Activated CD4-positive, alpha-beta memory T cell treated with anti-CD3 and anti-CD28 coated beads, Interleukin-2, amount 10 ng/mL, durations not matched to agents 7 days and 5 days (primary cell): ENCODE measurements at regions of chr5 and their contacts with region 1.

Region 1: DNA sequence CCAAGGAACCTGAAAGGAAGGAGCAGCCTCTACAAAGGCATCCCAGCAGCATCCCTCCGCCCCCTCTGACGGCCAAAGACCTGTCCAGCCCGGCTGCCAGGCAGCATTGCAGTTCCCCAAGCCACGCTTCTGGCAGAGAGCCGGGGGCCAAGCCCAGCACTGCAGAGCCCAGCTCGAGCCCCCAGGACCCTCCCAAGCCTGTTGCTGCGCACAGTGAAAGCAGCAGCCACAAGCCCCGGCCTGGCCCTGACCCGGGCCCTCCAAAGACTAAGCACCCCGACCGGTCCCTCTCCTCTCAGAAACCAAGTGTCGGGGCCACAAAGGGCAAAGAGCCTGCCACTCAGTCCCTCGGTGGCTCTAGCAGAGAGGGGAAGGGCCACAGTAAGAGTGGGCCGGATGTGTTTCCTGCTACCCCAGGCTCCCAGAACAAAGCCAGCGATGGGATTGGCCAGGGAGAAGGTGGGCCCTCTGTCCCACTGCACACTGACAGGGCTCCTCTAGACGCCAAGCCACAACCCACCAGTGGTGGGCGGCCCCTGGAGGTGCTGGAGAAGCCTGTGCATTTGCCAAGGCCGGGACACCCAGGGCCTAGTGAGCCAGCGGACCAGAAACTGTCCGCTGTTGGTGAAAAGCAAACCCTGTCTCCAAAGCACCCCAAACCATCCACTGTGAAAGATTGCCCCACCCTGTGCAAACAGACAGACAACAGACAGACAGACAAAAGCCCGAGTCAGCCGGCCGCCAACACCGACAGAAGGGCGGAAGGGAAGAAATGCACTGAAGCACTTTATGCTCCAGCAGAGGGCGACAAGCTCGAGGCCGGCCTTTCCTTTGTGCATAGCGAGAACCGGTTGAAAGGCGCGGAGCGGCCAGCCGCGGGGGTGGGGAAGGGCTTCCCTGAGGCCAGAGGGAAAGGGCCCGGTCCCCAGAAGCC is 30.8 kb downstream of the CD180 start:
- DNase-seq: peak; percentile 90
- H3K4me3 Mint-ChIP-seq: peak overlapping the region; percentile 86
- H3K27ac Mint-ChIP-seq: peak overlapping the region; percentile 98
- H3K4me1 Mint-ChIP-seq: peaks cover 67% of the 10 kb centered on the region
- H3K27me3 Mint-ChIP-seq: no peaks in the 10 kb centered on the region

Region 2: DNA sequence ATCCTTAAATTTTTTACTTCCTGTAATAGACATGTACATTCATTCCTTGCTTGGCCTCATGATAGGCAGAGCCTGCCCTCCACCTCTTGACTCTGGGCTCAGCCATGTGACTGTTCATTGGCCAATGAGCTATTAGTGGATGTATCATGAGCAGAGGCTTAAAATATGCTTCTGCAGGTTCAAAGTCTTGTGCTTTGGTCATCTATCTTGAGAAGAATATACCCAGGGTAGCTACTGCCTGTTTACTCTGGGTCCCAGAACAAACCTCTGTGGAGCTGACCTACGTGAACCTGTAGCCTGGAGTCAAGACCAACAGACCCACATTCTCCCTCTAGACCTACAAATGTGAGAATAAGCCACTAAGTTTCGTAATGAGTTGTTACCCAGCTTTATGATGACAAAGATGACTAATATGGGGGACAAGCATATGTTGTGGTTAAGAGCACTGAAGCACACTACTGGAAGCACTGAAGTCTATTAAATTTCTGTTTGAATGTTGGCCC is 325.2 kb before region 1 on chr5:
- CTCF ChIA-PET with region 1: no interaction called
- POLR2A ChIA-PET with region 1: interaction called, 13 read pairs
- DNase-seq: peak; percentile 55
- H3K4me3 Mint-ChIP-seq: peak overlapping the region; percentile 31
- H3K27ac Mint-ChIP-seq: peak overlapping the region; percentile 92
- H3K4me1 Mint-ChIP-seq: peaks cover 64% of the 10 kb centered on the region
- H3K27me3 Mint-ChIP-seq: peaks cover 3% of the 10 kb centered on the region

Region 3: GRCh38 chr5:67182301-67182790 is 16.6 kb after region 1 on chr5:
- CTCF ChIA-PET with region 1: interaction called, 24 read pairs
- POLR2A ChIA-PET with region 1: interaction called, 160 read pairs
- DNase-seq: no peak
- H3K4me3 Mint-ChIP-seq: peak overlapping the region; percentile 34
- H3K27ac Mint-ChIP-seq: peak overlapping the region; percentile 77
- H3K4me1 Mint-ChIP-seq: peaks cover 53% of the 10 kb centered on the region
- H3K27me3 Mint-ChIP-seq: no peaks in the 10 kb centered on the region

Region 4: DNA sequence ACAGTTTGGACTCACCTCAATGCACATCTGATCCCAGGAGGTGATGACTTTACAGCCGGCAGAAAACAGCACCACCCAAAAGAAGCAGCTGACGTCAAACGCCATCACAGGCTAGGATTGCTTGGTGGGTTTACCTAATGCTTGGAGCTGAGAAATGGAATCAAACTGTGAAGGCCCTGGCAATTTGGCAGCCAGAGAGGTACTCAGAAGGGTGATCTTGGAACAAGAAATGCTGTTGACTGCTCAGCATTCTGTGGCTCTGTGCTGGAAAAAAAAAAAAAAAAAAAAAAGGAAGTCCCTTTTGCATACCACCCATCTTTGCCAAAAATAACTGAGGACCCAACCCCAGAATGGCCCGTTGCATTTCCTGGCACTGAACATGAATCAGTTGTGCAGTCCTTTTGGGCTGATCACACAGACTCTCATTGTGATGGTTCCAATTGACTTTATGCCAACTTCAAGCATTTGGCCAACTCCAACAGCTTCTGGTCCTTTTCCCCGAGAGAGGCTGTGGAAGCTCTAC is 30.8 kb after region 1 on chr5 and contains the start of gene CD180:
- CTCF ChIA-PET with region 1: interaction called, 519 read pairs
- POLR2A ChIA-PET with region 1: interaction called, 863 read pairs
- DNase-seq: no peak
- H3K4me3 Mint-ChIP-seq: no peak within 1 kb of the TSS
- H3K27ac Mint-ChIP-seq: no peak within 1 kb of the TSS
- H3K4me1 Mint-ChIP-seq: peaks cover 49% of the 10 kb centered on the region
- H3K27me3 Mint-ChIP-seq: no peaks in the 10 kb centered on the region
- total RNA-seq, gene CD180: 0.75 to 0.88 TPM

Region 5: GRCh38 chr5:67215583-67216471 is 50.0 kb after region 1 on chr5:
- CTCF ChIA-PET with region 1: interaction called, 519 read pairs
- POLR2A ChIA-PET with region 1: interaction called, 863 read pairs
- DNase-seq: peak; percentile 84
- H3K4me3 Mint-ChIP-seq: peak overlapping the region; percentile 75
- H3K27ac Mint-ChIP-seq: peak overlapping the region; percentile 99
- H3K4me1 Mint-ChIP-seq: peaks cover 67% of the 10 kb centered on the region
- H3K27me3 Mint-ChIP-seq: no peaks in the 10 kb centered on the region

Region 6: GRCh38 chr5:67425514-67425913 is 259.7 kb after region 1 on chr5:
- CTCF ChIA-PET with region 1: no interaction called
- POLR2A ChIA-PET with region 1: no interaction called
- DNase-seq: no peak
- H3K4me3 Mint-ChIP-seq: no peak overlapping the region
- H3K27ac Mint-ChIP-seq: no peak overlapping the region
- H3K4me1 Mint-ChIP-seq: peaks cover 8% of the 10 kb centered on the region
- H3K27me3 Mint-ChIP-seq: no peaks in the 10 kb centered on the region

Region 7: GRCh38 chr5:68215208-68215897 is 1049.6 kb after region 1 on chr5 and contains the start of gene PIK3R1:
- CTCF ChIA-PET with region 1: interaction called, 4 read pairs
- POLR2A ChIA-PET with region 1: interaction called, 15 read pairs
- DNase-seq: peak; percentile 93
- H3K4me3 Mint-ChIP-seq: peak within 1 kb of the TSS; percentile 85
- H3K27ac Mint-ChIP-seq: peak within 1 kb of the TSS; percentile 88
- H3K4me1 Mint-ChIP-seq: peaks cover 33% of the 10 kb centered on the region
- H3K27me3 Mint-ChIP-seq: no peaks in the 10 kb centered on the region
- total RNA-seq, gene PIK3R1: 83.1 to 86.4 TPM